ENCODE measurements at regions of chr1 and their contacts with region 1.

Region 1: GRCh38 chr1:19096036-19096833 is 113.8 kb downstream of the UBR4 start:
- DNase-seq: peak; percentile 55
- H3K4me3 ChIP-seq: no peak overlapping the region
- H3K27ac ChIP-seq: peak overlapping the region; percentile 44
- H3K4me1 ChIP-seq: peaks cover 7% of the 10 kb centered on the region
- H3K27me3 ChIP-seq: no peaks in the 10 kb centered on the region
- CTCF ChIP-seq: peak; percentile 62

Region 2: GRCh38 chr1:18883636-18884418 is 212.4 kb before region 1 on chr1:
- CTCF ChIA-PET with region 1: interaction called, 4 read pairs
- POLR2A ChIA-PET with region 1: no interaction called
- intact Hi-C with region 1: loop called (anchors 1 kb)
- DNase-seq: peak; percentile 82
- H3K4me3 ChIP-seq: no peak overlapping the region
- H3K27ac ChIP-seq: no peak overlapping the region
- H3K4me1 ChIP-seq: peaks cover 9% of the 10 kb centered on the region
- H3K27me3 ChIP-seq: no peaks in the 10 kb centered on the region
- CTCF ChIP-seq: peak; percentile 91

Region 3: GRCh38 chr1:18902523-18903290 is 193.5 kb before region 1 on chr1 and contains the start of gene ALDH4A1:
- CTCF ChIA-PET with region 1: interaction called, 11 read pairs
- POLR2A ChIA-PET with region 1: no interaction called
- intact Hi-C with region 1: loop called (anchors 2 kb)
- DNase-seq: peak; percentile 99
- H3K4me3 ChIP-seq: peak within 1 kb of the TSS; percentile 89
- H3K27ac ChIP-seq: peak within 1 kb of the TSS; percentile 95
- H3K4me1 ChIP-seq: peaks cover 26% of the 10 kb centered on the region
- H3K27me3 ChIP-seq: no peaks in the 10 kb centered on the region
- CTCF ChIP-seq: no peak
- total RNA-seq, gene ALDH4A1: 18.4 and 23.1 TPM in 2 replicates

Region 4: GRCh38 chr1:18913065-18913835 is 183.0 kb before region 1 on chr1:
- CTCF ChIA-PET with region 1: interaction called, 15 read pairs
- POLR2A ChIA-PET with region 1: no interaction called
- intact Hi-C with region 1: no loop called
- DNase-seq: peak; percentile 83
- H3K4me3 ChIP-seq: no peak overlapping the region
- H3K27ac ChIP-seq: peak overlapping the region; percentile 2
- H3K4me1 ChIP-seq: peaks cover 8% of the 10 kb centered on the region
- H3K27me3 ChIP-seq: no peaks in the 10 kb centered on the region
- CTCF ChIP-seq: peak; percentile 100

Region 5: GRCh38 chr1:19139711-19140110 is 43.5 kb after region 1 on chr1:
- CTCF ChIA-PET with region 1: no interaction called
- POLR2A ChIA-PET with region 1: no interaction called
- intact Hi-C with region 1: no loop called
- DNase-seq: no peak
- H3K4me3 ChIP-seq: no peak overlapping the region
- H3K27ac ChIP-seq: no peak overlapping the region
- H3K4me1 ChIP-seq: no peaks in the 10 kb centered on the region
- H3K27me3 ChIP-seq: no peaks in the 10 kb centered on the region
- CTCF ChIP-seq: no peak

Region 6: GRCh38 chr1:19232526-19232851 is 136.3 kb after region 1 on chr1:
- CTCF ChIA-PET with region 1: no interaction called
- POLR2A ChIA-PET with region 1: no interaction called
- intact Hi-C with region 1: no loop called
- DNase-seq: no peak
- H3K4me3 ChIP-seq: no peak overlapping the region
- H3K27ac ChIP-seq: no peak overlapping the region
- H3K4me1 ChIP-seq: no peaks in the 10 kb centered on the region
- H3K27me3 ChIP-seq: no peaks in the 10 kb centered on the region
- CTCF ChIP-seq: no peak

Region 7: DNA sequence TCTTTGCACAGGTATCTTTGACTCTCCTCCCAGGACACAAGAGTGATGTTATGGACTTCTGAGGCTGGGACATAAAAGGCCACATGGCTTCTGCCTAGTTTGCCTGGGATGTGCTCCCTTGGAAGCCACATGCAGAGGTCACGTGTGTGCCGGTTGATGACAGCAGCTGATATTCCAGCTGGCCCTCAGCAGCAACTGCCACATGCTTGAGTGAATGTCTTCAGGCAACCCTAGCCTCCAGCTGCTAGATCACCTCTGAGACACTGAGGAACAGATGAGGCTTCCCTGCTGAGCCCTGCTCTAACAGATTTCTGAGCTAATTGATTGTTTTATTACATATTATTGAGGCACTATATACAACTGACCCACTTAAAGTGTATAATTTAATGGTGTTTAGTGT is 204.0 kb after region 1 on chr1:
- CTCF ChIA-PET with region 1: no interaction called
- POLR2A ChIA-PET with region 1: interaction called, 15 read pairs
- intact Hi-C with region 1: no loop called
- DNase-seq: no peak
- H3K4me3 ChIP-seq: no peak overlapping the region
- H3K27ac ChIP-seq: no peak overlapping the region
- H3K4me1 ChIP-seq: no peaks in the 10 kb centered on the region
- H3K27me3 ChIP-seq: no peaks in the 10 kb centered on the region
- CTCF ChIP-seq: no peak